CD4-positive, alpha-beta memory T cell (primary cell): ENCODE measurements at regions of chr5 and their contacts with region 1.

Region 1: GRCh38 chr5:132500931-132501630 is 10.5 kb upstream of the IRF1 start:
- DNase-seq: peak; percentile 75 to 80 (median 76)
- H3K4me3 ChIP-seq: no peak overlapping the region
- H3K4me3 Mint-ChIP-seq: peak overlapping the region in 1 of 8 donors; percentile 0
- H3K27ac ChIP-seq: peak overlapping the region; percentile 18
- H3K27ac Mint-ChIP-seq: peak overlapping the region in 6 of 7 donors; percentile 13 to 97 (median 58)
- H3K4me1 ChIP-seq: peaks cover 44% of the 10 kb centered on the region
- H3K4me1 Mint-ChIP-seq: peaks cover 19 to 50% (median 36%) of the 10 kb centered on the region in 4 donors
- H3K27me3 ChIP-seq: no peaks in the 10 kb centered on the region
- H3K27me3 Mint-ChIP-seq: peaks cover 1 to 2% of the 10 kb centered on the region in 2 donors

Region 2: DNA sequence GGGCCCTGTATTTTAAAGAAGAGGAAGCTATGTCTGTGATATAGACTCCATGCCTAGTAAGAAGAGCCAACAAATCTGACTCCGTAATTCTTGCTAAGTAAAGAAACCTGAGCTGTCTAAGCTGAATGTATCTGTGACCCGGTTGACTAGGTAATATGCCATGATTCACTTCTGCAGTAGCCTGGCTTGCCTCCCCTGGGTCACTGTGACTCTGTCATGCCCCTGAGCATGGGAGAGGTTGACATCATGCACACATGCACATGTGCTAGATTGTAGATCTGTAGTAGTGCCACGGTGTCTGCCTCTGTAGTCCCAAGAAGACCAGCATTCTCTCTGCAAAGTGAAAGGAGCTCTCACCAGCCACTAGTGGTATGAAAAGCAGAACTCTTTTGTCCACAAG is 122.5 kb before region 1 on chr5:
- CTCF ChIA-PET with region 1: interaction called, 543 read pairs
- POLR2A ChIA-PET with region 1: interaction called, 4 read pairs
- intact Hi-C with region 1: no loop called
- DNase-seq: no peak
- H3K4me3 ChIP-seq: no peak overlapping the region
- H3K4me3 Mint-ChIP-seq: no peak overlapping the region
- H3K27ac ChIP-seq: no peak overlapping the region
- H3K27ac Mint-ChIP-seq: peak overlapping the region in 1 of 7 donors; percentile 35
- H3K4me1 ChIP-seq: no peaks in the 10 kb centered on the region
- H3K4me1 Mint-ChIP-seq: peaks cover 0 to 3% (median 0%) of the 10 kb centered on the region in 4 donors
- H3K27me3 ChIP-seq: no peaks in the 10 kb centered on the region
- H3K27me3 Mint-ChIP-seq: no peaks in the 10 kb centered on the region

Region 3: GRCh38 chr5:132410451-132411381 is 90.4 kb before region 1 on chr5:
- CTCF ChIA-PET with region 1: interaction called, 141 read pairs
- POLR2A ChIA-PET with region 1: interaction called, 592 read pairs
- intact Hi-C with region 1: no loop called
- DNase-seq: peak; percentile 84 to 91 (median 86)
- H3K4me3 ChIP-seq: peak overlapping the region; percentile 86 to 95
- H3K4me3 Mint-ChIP-seq: peak overlapping the region; percentile 91 to 99 (median 99)
- H3K27ac ChIP-seq: peak overlapping the region; percentile 99
- H3K27ac Mint-ChIP-seq: peak overlapping the region; percentile 99 to 100 (median 99)
- H3K4me1 ChIP-seq: peaks cover 78% of the 10 kb centered on the region
- H3K4me1 Mint-ChIP-seq: peaks cover 61 to 92% (median 75%) of the 10 kb centered on the region in 4 donors
- H3K27me3 ChIP-seq: no peaks in the 10 kb centered on the region
- H3K27me3 Mint-ChIP-seq: no peaks in the 10 kb centered on the region

Region 4: GRCh38 chr5:132437604-132438266 is 63.3 kb before region 1 on chr5:
- CTCF ChIA-PET with region 1: interaction called, 11 read pairs
- POLR2A ChIA-PET with region 1: interaction called, 565 read pairs
- intact Hi-C with region 1: no loop called
- DNase-seq: peak; percentile 49 to 75 (median 52)
- H3K4me3 ChIP-seq: peak overlapping the region; percentile 4 to 8
- H3K4me3 Mint-ChIP-seq: peak overlapping the region; percentile 52 to 85 (median 70)
- H3K27ac ChIP-seq: peak overlapping the region; percentile 60
- H3K27ac Mint-ChIP-seq: peak overlapping the region; percentile 89 to 96 (median 92)
- H3K4me1 ChIP-seq: peaks cover 99% of the 10 kb centered on the region
- H3K4me1 Mint-ChIP-seq: peaks cover 64 to 97% (median 83%) of the 10 kb centered on the region in 4 donors
- H3K27me3 ChIP-seq: no peaks in the 10 kb centered on the region
- H3K27me3 Mint-ChIP-seq: no peaks in the 10 kb centered on the region

Region 5: GRCh38 chr5:132473019-132473531 is 28.0 kb before region 1 on chr5:
- CTCF ChIA-PET with region 1: interaction called, 15 read pairs
- POLR2A ChIA-PET with region 1: interaction called, 1,580 read pairs
- intact Hi-C with region 1: no loop called
- DNase-seq: peak; percentile 90 to 96 (median 95)
- H3K4me3 ChIP-seq: no peak overlapping the region
- H3K4me3 Mint-ChIP-seq: peak overlapping the region; percentile 27 to 86 (median 68)
- H3K27ac ChIP-seq: peak overlapping the region; percentile 65
- H3K27ac Mint-ChIP-seq: peak overlapping the region; percentile 91 to 99 (median 97)
- H3K4me1 ChIP-seq: peaks cover 97% of the 10 kb centered on the region
- H3K4me1 Mint-ChIP-seq: peaks cover 60 to 96% (median 79%) of the 10 kb centered on the region in 4 donors
- H3K27me3 ChIP-seq: no peaks in the 10 kb centered on the region
- H3K27me3 Mint-ChIP-seq: peaks cover 0 to 5% of the 10 kb centered on the region in 2 donors

Region 6: GRCh38 chr5:132526290-132526973 is 25.4 kb after region 1 on chr5:
- CTCF ChIA-PET with region 1: interaction called, 10 read pairs
- POLR2A ChIA-PET with region 1: no interaction called
- intact Hi-C with region 1: no loop called
- DNase-seq: peak; percentile 43 to 63 (median 49)
- H3K4me3 ChIP-seq: no peak overlapping the region
- H3K4me3 Mint-ChIP-seq: peak overlapping the region in 2 of 8 donors; percentile 57 to 60
- H3K27ac ChIP-seq: no peak overlapping the region
- H3K27ac Mint-ChIP-seq: no peak overlapping the region
- H3K4me1 ChIP-seq: peaks cover 16% of the 10 kb centered on the region
- H3K4me1 Mint-ChIP-seq: peaks cover 8 to 15% (median 13%) of the 10 kb centered on the region in 4 donors
- H3K27me3 ChIP-seq: no peaks in the 10 kb centered on the region
- H3K27me3 Mint-ChIP-seq: peaks cover 0 to 1% of the 10 kb centered on the region in 2 donors